Activated CD8-positive, alpha-beta T cell treated with anti-CD3 and anti-CD28 coated beads for 36 hours (primary cell): ENCODE measurements at regions of chr1 and their contacts with region 1.

Region 1: GRCh38 chr1:26582836-26583460 is 53.4 kb downstream of the RPS6KA1 start:
- DNase-seq: peak; percentile 94
- ATAC-seq: peak; percentile 55
- H3K4me3 Mint-ChIP-seq: peak overlapping the region; percentile 9
- H3K27ac Mint-ChIP-seq: peak overlapping the region; percentile 97
- H3K4me1 Mint-ChIP-seq: peaks cover 56% of the 10 kb centered on the region
- H3K27me3 Mint-ChIP-seq: no peaks in the 10 kb centered on the region
- CTCF ChIP-seq: no peak

Region 2: GRCh38 chr1:26541816-26542711 is 40.9 kb before region 1 on chr1:
- CTCF ChIA-PET with region 1: interaction called, 10 read pairs
- POLR2A ChIA-PET with region 1: interaction called, 5 read pairs
- intact Hi-C with region 1: loop called (anchors 2 kb)
- DNase-seq: peak; percentile 96
- ATAC-seq: peak; percentile 78
- H3K4me3 Mint-ChIP-seq: peak overlapping the region; percentile 92
- H3K27ac Mint-ChIP-seq: peak overlapping the region; percentile 97
- H3K4me1 Mint-ChIP-seq: peaks cover 79% of the 10 kb centered on the region
- H3K27me3 Mint-ChIP-seq: no peaks in the 10 kb centered on the region
- CTCF ChIP-seq: peak; percentile 81

Region 3: DNA sequence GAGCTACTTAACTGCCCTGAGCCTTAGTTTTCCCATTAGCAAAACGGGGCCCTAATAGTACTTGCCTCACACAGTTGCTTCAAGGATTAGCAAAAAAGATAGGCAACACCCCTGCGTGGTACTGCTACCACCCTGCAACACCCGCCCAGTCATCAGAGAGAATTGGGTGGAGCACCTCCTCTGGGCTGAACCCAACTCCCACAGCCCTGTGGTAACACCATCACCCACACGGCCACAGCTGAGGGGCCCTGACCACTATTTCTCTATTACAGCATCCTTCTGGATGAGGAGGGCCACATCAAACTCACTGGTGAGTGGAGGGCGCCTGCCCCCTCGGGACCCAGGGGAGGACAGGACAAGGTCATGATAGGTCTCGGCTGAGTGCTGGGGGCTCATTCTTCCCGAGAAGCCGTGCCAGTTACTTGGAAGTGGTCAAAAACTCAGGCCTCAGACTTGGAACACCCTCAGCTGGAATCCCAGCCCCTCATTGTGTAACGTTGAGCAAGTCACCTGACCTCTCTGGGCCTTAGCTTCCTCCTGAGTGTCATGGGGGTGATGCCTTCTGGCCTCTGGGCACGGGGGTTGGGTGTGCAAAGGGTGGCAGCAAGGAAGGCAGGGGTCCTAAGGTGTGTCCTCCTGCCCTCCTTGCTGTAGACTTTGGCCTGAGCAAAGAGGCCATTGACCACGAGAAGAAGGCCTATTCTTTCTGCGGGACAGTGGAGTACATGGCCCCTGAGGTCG is 28.8 kb before region 1 on chr1:
- CTCF ChIA-PET with region 1: no interaction called
- POLR2A ChIA-PET with region 1: no interaction called
- intact Hi-C with region 1: no loop called
- DNase-seq: peak; percentile 41
- ATAC-seq: peak; percentile 53
- H3K4me3 Mint-ChIP-seq: no peak overlapping the region
- H3K27ac Mint-ChIP-seq: peak overlapping the region; percentile 34
- H3K4me1 Mint-ChIP-seq: peaks cover 30% of the 10 kb centered on the region
- H3K27me3 Mint-ChIP-seq: no peaks in the 10 kb centered on the region
- CTCF ChIP-seq: no peak

Region 4: DNA sequence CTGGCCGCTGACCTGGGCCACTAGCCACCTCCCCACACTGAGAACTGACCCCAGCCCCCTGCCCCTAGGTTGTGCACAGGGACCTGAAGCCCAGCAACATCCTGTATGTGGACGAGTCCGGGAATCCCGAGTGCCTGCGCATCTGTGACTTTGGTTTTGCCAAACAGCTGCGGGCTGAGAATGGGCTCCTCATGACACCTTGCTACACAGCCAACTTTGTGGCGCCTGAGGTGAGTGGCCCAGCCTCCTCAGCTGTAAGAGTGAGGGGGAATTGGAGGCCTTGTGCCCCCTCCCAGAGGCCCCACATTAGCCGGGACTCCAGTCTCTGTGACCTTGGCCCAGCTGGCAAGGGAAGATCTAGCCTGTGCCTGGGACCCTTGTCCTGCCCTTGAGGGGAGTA is 11.6 kb before region 1 on chr1:
- CTCF ChIA-PET with region 1: interaction called, 3 read pairs
- POLR2A ChIA-PET with region 1: interaction called, 11 read pairs
- intact Hi-C with region 1: no loop called
- DNase-seq: no peak
- ATAC-seq: no peak
- H3K4me3 Mint-ChIP-seq: no peak overlapping the region
- H3K27ac Mint-ChIP-seq: no peak overlapping the region
- H3K4me1 Mint-ChIP-seq: peaks cover 43% of the 10 kb centered on the region
- H3K27me3 Mint-ChIP-seq: no peaks in the 10 kb centered on the region
- CTCF ChIP-seq: no peak

Region 5: GRCh38 chr1:26593385-26593784 is 10.4 kb after region 1 on chr1:
- CTCF ChIA-PET with region 1: interaction called, 12 read pairs
- POLR2A ChIA-PET with region 1: no interaction called
- intact Hi-C with region 1: no loop called
- DNase-seq: no peak
- ATAC-seq: no peak
- H3K4me3 Mint-ChIP-seq: no peak overlapping the region
- H3K27ac Mint-ChIP-seq: no peak overlapping the region
- H3K4me1 Mint-ChIP-seq: peaks cover 10% of the 10 kb centered on the region
- H3K27me3 Mint-ChIP-seq: no peaks in the 10 kb centered on the region
- CTCF ChIP-seq: no peak